Panc1 (cell line): ENCODE measurements at regions of chr10 and their contacts with region 1.

Region 1: GRCh38 chr10:49299816-49300139 is 808 bp downstream of the C10orf71 start:
- DNase-seq: no peak
- ATAC-seq: no peak
- H3K4me3 ChIP-seq: no peak overlapping the region
- H3K27ac ChIP-seq: no peak overlapping the region
- H3K4me1 ChIP-seq: no peaks in the 10 kb centered on the region
- H3K27me3 ChIP-seq: no peaks in the 10 kb centered on the region; the same call in 1 of the 2 replicates
- CTCF ChIP-seq: no peak

Region 2: GRCh38 chr10:48880016-48880705 is 419.6 kb before region 1 on chr10:
- CTCF ChIA-PET with region 1: no interaction called
- POLR2A ChIA-PET with region 1: no interaction called
- in situ Hi-C with region 1: no loop called
- intact Hi-C with region 1: no loop called
- DNase-seq: no peak
- ATAC-seq: no peak
- H3K4me3 ChIP-seq: no peak overlapping the region
- H3K27ac ChIP-seq: no peak overlapping the region
- H3K4me1 ChIP-seq: no peaks in the 10 kb centered on the region
- H3K27me3 ChIP-seq: no peaks in the 10 kb centered on the region; the same call in 1 of the 2 replicates
- CTCF ChIP-seq: no peak

Region 3: GRCh38 chr10:49335364-49335972 is 35.7 kb after region 1 on chr10:
- CTCF ChIA-PET with region 1: no interaction called
- POLR2A ChIA-PET with region 1: interaction called, 13 read pairs
- in situ Hi-C with region 1: no loop called
- intact Hi-C with region 1: no loop called
- DNase-seq: no peak
- ATAC-seq: no peak
- H3K4me3 ChIP-seq: no peak overlapping the region
- H3K27ac ChIP-seq: no peak overlapping the region
- H3K4me1 ChIP-seq: no peaks in the 10 kb centered on the region
- H3K27me3 ChIP-seq: peaks cover 7% of the 10 kb centered on the region
- CTCF ChIP-seq: no peak